A673 (cell line): ENCODE measurements at regions of chr6 and their contacts with region 1.

Region 1: DNA sequence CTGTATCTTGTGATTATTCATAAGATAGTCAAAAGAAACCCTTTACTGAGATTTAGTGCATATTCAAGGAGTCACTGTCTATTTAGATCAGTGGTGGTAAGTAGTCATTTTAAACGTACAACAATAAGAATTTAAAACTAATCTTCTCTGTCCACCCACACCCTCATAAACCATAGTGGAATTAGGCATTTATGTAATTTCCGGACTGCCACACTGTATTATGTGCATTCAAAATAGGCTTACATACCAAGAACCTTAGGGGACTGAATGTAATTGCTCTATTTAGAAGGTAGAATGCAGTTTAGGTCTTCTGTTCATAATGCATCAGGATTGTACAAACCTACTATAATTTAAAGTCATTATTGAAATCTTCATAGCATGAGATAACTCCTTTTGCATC is 685.4 kb downstream of the TENT5A start:
- DNase-seq: peak; percentile 96
- H3K4me3 ChIP-seq: no peak overlapping the region
- H3K27ac ChIP-seq: no peak overlapping the region
- H3K4me1 ChIP-seq: peaks cover 31% of the 10 kb centered on the region
- H3K27me3 ChIP-seq: peaks cover 22% of the 10 kb centered on the region
- CTCF ChIP-seq: no peak

Region 2: GRCh38 chr6:80214436-80215022 is 852.5 kb before region 1 on chr6:
- CTCF ChIA-PET with region 1: no interaction called
- POLR2A ChIA-PET with region 1: no interaction called
- intact Hi-C with region 1: loop called (anchors 10 kb)
- DNase-seq: peak; percentile 74
- H3K4me3 ChIP-seq: no peak overlapping the region
- H3K27ac ChIP-seq: no peak overlapping the region
- H3K4me1 ChIP-seq: peaks cover 8% of the 10 kb centered on the region
- H3K27me3 ChIP-seq: no peaks in the 10 kb centered on the region
- CTCF ChIP-seq: peak; percentile 77

Region 3: GRCh38 chr6:80449726-80450125 is 617.3 kb before region 1 on chr6:
- CTCF ChIA-PET with region 1: no interaction called
- POLR2A ChIA-PET with region 1: no interaction called
- intact Hi-C with region 1: no loop called
- DNase-seq: no peak
- H3K4me3 ChIP-seq: no peak overlapping the region
- H3K27ac ChIP-seq: no peak overlapping the region
- H3K4me1 ChIP-seq: no peaks in the 10 kb centered on the region
- H3K27me3 ChIP-seq: no peaks in the 10 kb centered on the region
- CTCF ChIP-seq: no peak

Region 4: DNA sequence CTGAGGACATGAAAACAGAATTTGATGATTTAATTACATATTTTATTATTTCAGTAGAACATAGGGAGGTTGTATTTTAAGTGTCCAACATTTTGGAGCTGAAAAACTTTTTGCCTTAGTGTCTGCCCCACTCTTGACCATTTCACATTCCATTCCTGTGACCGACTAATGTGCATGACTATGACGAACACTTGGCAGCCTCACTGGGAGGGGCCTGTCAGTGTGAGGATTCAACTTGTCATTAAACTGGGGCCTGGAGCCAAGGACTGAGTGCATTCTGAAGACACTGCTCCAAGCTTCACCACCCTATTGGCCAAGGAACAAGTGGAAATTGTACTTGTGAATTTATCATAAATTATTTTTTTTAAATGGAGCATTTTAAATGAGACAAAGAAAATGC is 299.2 kb before region 1 on chr6:
- CTCF ChIA-PET with region 1: no interaction called
- POLR2A ChIA-PET with region 1: no interaction called
- intact Hi-C with region 1: loop called (anchors 10 kb)
- DNase-seq: peak; percentile 46
- H3K4me3 ChIP-seq: no peak overlapping the region
- H3K27ac ChIP-seq: no peak overlapping the region
- H3K4me1 ChIP-seq: no peaks in the 10 kb centered on the region
- H3K27me3 ChIP-seq: no peaks in the 10 kb centered on the region
- CTCF ChIP-seq: no peak

Region 5: GRCh38 chr6:80872199-80872950 is 194.7 kb before region 1 on chr6:
- CTCF ChIA-PET with region 1: no interaction called
- POLR2A ChIA-PET with region 1: no interaction called
- intact Hi-C with region 1: loop called (anchors 10 kb)
- DNase-seq: peak; percentile 88
- H3K4me3 ChIP-seq: no peak overlapping the region
- H3K27ac ChIP-seq: peak overlapping the region; percentile 95
- H3K4me1 ChIP-seq: peaks cover 17% of the 10 kb centered on the region
- H3K27me3 ChIP-seq: no peaks in the 10 kb centered on the region
- CTCF ChIP-seq: no peak

Region 6: GRCh38 chr6:81241126-81242041 is 174.3 kb after region 1 on chr6:
- CTCF ChIA-PET with region 1: no interaction called
- POLR2A ChIA-PET with region 1: no interaction called
- intact Hi-C with region 1: no loop called
- DNase-seq: peak; percentile 73
- H3K4me3 ChIP-seq: no peak overlapping the region
- H3K27ac ChIP-seq: no peak overlapping the region
- H3K4me1 ChIP-seq: no peaks in the 10 kb centered on the region
- H3K27me3 ChIP-seq: no peaks in the 10 kb centered on the region
- CTCF ChIP-seq: peak; percentile 67